ENCODE measurements at regions of chr16 and their contacts with region 1.

Region 1: DNA sequence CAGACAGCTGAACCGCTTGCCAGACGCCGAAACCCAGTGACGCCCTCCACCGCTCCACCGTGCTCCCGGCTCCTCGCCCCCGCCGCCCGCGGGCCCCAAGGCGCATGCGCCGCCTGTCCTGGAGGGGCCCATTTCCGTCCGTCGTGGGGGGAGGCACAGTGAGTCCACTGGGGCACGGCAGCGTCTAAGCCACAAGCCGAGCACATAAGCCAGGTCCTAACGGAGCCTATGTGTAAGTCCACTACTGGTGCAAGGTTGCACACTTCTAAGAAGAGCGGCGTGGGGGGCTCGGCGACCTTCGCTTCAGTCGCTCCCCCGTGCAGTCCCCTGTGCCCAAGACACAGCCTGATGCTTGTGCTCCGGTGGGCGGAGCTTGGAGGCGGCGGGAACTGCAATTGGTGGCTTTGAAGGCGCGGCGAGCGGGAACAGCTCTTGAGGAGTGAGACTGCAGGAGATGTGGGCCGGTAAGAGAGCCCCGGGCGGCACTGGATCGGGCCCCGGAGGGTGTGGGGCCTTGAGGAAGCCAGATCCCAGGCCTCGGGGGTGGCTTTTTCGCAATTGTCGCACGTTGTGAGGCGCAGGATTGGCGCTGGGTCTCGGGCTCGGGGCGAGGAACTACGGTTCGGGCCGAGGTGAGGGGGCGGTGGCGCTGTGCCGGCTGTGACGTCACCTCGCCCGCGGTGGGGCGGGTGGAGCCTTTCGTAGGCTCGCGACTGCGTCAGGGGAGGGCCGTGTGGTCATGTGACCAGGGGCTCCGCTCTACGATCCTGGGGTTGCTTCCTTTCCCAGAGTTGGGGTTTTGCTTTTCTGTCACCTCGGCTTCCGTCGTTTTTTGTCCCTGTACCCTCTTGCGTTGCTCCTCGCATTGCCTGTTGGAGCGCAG is at the starts of genes CENPN and CMC2:
- DNase-seq: peak; percentile 95
- H3K4me3 ChIP-seq: peak within 1 kb of the TSS; percentile 95
- H3K27me3 ChIP-seq: no peaks in the 10 kb centered on the region
- CTCF ChIP-seq: peak; percentile 19; the same call in 1 of the 2 replicates
- polyA plus RNA-seq, gene CENPN: 24.8 and 38.2 TPM in 2 replicates
- polyA plus RNA-seq, gene CMC2: 56.4 and 101 TPM in 2 replicates

Region 2: DNA sequence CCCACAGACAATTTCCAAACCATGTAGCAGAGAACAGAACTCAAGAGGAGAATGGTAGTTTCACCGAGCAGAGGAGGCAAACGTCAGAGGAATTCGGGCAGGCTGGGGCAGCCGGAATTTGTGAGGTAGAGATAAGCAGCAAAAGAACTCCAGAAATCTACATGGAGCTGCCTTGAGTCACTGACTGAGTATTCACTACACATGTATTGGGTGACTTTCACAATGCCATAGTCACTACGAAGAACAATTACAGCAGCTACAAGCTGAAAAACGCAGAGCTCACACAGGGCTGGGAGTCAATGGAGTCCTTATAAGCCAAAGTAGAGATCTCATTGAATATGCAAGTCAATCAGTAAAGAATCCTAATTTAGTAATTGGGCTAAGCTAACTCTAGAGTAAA is 13.7 kb before region 1 on chr16:
- CTCF ChIA-PET with region 1: interaction called, 25 read pairs
- POLR2A ChIA-PET with region 1: no interaction called
- DNase-seq: peak; percentile 59
- H3K4me3 ChIP-seq: 0 out of 2 replicates have a peak overlapping the region, but pooled peaks have one; percentile 3
- H3K27me3 ChIP-seq: no peaks in the 10 kb centered on the region
- CTCF ChIP-seq: no peak

Region 3: DNA sequence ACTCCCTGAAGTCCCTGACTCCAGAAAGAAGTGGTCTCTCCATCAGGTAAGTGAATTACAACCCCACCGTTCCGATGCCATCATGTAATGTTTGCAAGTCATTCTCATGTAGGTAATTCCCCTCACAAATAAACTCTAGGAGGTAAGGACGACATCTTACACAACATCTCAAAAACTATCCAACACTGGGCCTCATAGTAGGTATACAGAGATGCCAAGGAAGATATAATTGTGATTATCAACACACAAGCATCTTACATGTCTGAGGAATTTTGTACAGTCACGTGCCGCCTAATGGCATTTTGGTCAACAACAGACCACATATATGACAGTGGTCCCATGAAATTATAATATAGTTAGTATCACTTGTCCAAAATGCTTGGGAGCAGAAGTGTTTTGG is 81.8 kb after region 1 on chr16:
- CTCF ChIA-PET with region 1: no interaction called
- POLR2A ChIA-PET with region 1: no interaction called
- DNase-seq: no peak
- H3K4me3 ChIP-seq: no peak overlapping the region
- H3K27me3 ChIP-seq: no peaks in the 10 kb centered on the region
- CTCF ChIP-seq: no peak

Region 4: DNA sequence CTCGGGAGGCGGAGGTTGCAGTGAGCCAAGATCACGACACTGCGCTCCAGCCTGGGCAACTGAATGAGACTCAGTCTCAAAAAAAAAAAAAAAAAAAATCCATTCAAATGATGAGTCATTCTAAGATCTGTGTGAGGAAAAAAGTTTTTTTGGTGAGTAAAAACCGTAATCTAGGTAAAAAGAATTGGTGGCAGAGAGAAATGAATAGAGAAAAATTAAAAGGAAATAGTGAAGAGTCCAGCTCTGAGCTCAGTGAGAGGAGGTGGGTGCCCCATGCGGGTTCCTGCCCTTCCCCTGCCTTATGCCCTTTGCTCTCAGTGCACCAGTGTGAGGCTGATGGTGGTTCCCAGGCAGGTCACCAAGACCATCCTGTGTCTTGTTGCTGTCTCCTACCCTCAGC is 328.6 kb after region 1 on chr16:
- CTCF ChIA-PET with region 1: no interaction called
- POLR2A ChIA-PET with region 1: interaction called, 10 read pairs
- DNase-seq: no peak
- H3K4me3 ChIP-seq: no peak overlapping the region
- H3K27me3 ChIP-seq: no peaks in the 10 kb centered on the region
- CTCF ChIP-seq: no peak